A549 (cell line): ENCODE measurements at regions of chr10 and their contacts with region 1.

Region 1: DNA sequence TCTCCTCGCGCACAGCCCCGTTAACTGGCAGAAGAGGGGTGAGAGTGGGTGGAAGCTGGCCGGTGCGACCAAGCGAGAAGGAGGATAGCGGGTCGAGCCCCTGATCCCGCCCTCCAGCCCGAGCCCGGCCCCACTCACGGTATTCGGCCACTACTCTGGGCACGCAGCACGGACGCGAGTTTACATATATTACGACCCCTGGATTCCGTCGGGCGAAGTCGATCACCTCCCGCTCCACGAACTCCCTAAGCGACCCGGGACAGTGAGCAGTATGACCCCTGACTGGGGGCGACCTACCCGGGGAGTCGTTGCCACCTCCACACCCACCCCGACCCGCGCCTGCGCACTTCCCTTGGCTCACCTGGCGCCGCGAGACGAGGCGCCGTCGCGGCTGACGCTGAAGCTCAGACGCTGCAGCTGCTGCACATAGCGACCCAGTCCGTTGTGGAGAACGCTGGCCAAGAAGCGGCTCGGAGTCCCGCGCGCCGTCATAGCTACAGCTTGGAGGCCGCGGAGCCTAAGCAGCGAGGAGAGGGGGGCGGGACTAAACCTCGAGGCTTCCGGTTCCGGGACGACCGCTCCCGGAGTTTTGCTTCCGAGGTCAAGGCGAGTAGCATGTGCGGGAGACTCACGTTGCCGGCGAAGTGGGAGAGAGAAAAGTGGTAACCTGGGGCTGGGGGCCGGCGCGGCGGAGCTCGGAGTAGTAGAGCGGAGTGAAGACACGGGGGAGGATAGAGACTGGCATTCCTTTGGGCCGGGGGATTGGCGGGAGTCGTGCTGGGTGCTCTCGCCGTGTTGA is at the starts of genes MRPL43 and TWNK:
- DNase-seq: peak; percentile 81 to 91
- ATAC-seq: peak; percentile 93 to 94
- H3K4me3 ChIP-seq: peak within 1 kb of the TSS; percentile 83
- H3K27ac ChIP-seq: peak within 1 kb of the TSS; percentile 96 to 97
- H3K4me1 ChIP-seq: peaks cover 31% of the 10 kb centered on the region
- CTCF ChIP-seq: no peak
- EP300 ChIP-seq: no peak
- POLR2A ChIP-seq: peak; percentile 42
- RAD21 ChIP-seq: no peak
- polyA plus RNA-seq, gene MRPL43: 76.3 and 77.4 TPM in 2 replicates
- polyA plus RNA-seq, gene TWNK: 21.1 and 26.7 TPM in 2 replicates

Region 2: DNA sequence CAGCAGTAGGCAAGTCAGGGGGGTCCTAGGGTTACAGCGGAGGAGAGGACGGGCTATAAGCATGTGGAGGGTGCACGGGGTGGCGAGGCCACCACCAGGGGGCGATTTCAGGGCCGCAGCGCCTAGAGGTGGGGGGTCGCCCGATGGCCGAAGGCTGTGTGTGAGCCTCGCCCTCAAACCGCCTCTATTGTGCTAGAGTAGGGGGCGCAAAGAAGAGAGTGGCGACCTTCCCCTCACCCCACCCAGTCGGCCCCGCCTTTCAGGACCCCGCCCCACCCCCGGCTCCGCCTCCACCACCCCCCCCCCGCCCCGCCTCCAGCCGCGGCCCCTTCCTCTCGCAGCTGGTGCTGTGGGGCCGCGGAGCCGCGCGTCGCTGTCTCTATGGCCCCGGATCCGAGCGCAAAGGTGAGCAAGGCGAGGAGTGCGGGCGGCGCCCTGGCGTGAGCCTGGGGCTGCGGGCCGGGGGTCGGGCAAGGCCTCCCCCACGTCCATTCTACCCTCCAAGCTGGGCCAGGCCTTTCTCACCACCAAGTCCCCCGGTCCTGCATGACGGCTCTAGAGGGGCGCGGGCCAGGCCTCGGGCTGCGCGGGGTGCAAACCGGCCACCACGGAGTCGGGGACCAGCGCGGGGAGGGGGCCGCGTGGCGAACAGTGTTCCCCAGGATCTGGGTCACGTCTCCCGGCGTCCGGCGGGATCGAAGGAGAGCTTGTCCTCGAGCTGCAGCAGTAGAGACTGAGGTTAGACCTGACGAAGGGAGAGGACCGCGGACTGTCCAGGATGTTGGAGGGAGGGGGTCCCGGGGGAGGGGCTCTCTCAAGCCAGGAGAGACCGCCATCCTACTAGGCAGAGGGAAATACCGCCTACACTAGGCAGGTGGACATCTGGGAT is 17.7 kb before region 1 on chr10 and contains the start of gene SEMA4G:
- CTCF ChIA-PET with region 1: interaction called, 11 read pairs
- POLR2A ChIA-PET with region 1: no interaction called
- DNase-seq: peak; percentile 44 to 79
- ATAC-seq: peak; percentile 58 to 88
- H3K4me3 ChIP-seq: peak within 1 kb of the TSS; percentile 84
- H3K27ac ChIP-seq: peak within 1 kb of the TSS; percentile 70 to 88
- H3K4me1 ChIP-seq: peaks cover 34% of the 10 kb centered on the region
- CTCF ChIP-seq: peak; percentile 60
- EP300 ChIP-seq: no peak
- POLR2A ChIP-seq: no peak; the same call in 1 of the 2 replicates
- RAD21 ChIP-seq: peak in 1 of 2 experiments; percentile 23; a peak in 1 of 5 replicates
- polyA plus RNA-seq, gene SEMA4G: 17.4 and 31.1 TPM in 2 replicates

Region 3: GRCh38 chr10:101018600-101019439 is 31.7 kb after region 1 on chr10:
- CTCF ChIA-PET with region 1: interaction called, 608 read pairs
- POLR2A ChIA-PET with region 1: interaction called, 15 read pairs
- DNase-seq: peak; percentile 82 to 95
- ATAC-seq: peak; percentile 80 to 93
- H3K4me3 ChIP-seq: no peak overlapping the region
- H3K27ac ChIP-seq: peak overlapping the region; percentile 35 to 76; a peak in 4 of 6 replicates
- H3K4me1 ChIP-seq: peaks cover 14% of the 10 kb centered on the region
- CTCF ChIP-seq: peak; percentile 78
- EP300 ChIP-seq: no peak
- POLR2A ChIP-seq: no peak
- RAD21 ChIP-seq: peak; percentile 75 to 78